Activated CD4-positive, alpha-beta T cell treated with anti-CD3 and anti-CD28 coated beads, Interleukin-2, amount 10 ng/mL, durations not matched to agents 24 days and 14 days (primary cell): ENCODE measurements at regions of chr19 and their contacts with region 1.

Region 1: GRCh38 chr19:6501740-6502648 is at the start of gene TUBB4A:
- DNase-seq: peak; percentile 85
- H3K4me3 Mint-ChIP-seq: peak within 1 kb of the TSS; percentile 83
- H3K27ac Mint-ChIP-seq: peak within 1 kb of the TSS; percentile 65
- H3K4me1 Mint-ChIP-seq: peaks cover 21% of the 10 kb centered on the region
- H3K27me3 Mint-ChIP-seq: peaks cover 22% of the 10 kb centered on the region
- total RNA-seq, gene TUBB4A: 2.8 and 3.3 TPM in 2 replicates

Region 2: DNA sequence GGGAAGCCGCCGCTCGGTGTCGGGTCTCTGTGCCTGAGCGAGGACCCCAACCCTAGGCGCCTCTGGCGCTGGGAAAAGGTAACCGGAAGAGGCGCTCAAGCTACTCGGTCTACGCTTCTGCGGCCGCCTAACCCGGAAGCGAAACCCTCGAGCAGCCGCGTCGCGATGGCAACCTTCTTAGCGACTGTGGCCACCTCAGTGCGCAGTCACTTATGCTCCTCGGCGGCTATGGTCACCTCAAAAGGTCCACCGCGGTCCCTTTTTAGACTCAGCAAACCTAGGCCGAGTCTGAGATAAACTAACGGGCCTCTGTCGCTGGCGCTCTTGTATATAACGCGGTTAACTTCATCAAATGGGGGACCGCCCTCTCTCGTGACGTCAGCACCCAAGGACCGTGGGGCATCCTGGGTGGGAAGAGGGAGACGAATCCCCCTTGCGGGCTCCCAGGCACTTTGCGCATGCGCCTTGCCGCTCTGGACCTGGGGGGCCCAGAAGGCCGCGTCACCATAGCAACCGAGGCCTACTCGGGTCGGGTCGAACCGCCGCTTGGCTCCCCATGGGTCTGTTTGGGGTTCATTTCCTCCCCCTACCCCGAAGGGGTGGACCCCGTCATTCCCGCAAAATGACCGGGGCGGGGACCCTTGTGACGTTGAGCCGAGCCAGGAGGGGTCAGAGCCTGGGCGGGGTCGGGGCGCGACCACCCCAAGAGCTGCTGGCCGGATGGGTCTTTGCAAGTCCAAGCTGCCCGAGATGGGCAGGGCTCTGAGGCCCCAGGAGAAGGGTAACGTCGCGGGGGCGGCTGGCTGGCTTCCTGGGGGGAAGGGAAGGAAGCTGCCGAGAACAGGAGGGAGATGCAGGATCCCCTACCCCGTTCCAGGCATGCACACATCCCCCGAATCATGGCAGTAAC is 108.7 kb before region 1 on chr19 and contains the start of gene GTF2F1:
- intact Hi-C with region 1: no loop called
- DNase-seq: peak; percentile 97
- H3K4me3 Mint-ChIP-seq: peak within 1 kb of the TSS; percentile 90
- H3K27ac Mint-ChIP-seq: peak within 1 kb of the TSS; percentile 95
- H3K4me1 Mint-ChIP-seq: peaks cover 18% of the 10 kb centered on the region
- H3K27me3 Mint-ChIP-seq: no peaks in the 10 kb centered on the region
- total RNA-seq, gene GTF2F1: 60.7 and 63.5 TPM in 2 replicates

Region 3: GRCh38 chr19:6481541-6482342 is 20.3 kb before region 1 on chr19 and contains the start of gene DENND1C:
- intact Hi-C with region 1: loop called (anchors 2 kb)
- DNase-seq: peak; percentile 91
- H3K4me3 Mint-ChIP-seq: peak within 1 kb of the TSS; percentile 99
- H3K27ac Mint-ChIP-seq: peak within 1 kb of the TSS; percentile 96
- H3K4me1 Mint-ChIP-seq: peaks cover 23% of the 10 kb centered on the region
- H3K27me3 Mint-ChIP-seq: no peaks in the 10 kb centered on the region
- total RNA-seq, gene DENND1C: 63.7 and 67.6 TPM in 2 replicates

Region 4: DNA sequence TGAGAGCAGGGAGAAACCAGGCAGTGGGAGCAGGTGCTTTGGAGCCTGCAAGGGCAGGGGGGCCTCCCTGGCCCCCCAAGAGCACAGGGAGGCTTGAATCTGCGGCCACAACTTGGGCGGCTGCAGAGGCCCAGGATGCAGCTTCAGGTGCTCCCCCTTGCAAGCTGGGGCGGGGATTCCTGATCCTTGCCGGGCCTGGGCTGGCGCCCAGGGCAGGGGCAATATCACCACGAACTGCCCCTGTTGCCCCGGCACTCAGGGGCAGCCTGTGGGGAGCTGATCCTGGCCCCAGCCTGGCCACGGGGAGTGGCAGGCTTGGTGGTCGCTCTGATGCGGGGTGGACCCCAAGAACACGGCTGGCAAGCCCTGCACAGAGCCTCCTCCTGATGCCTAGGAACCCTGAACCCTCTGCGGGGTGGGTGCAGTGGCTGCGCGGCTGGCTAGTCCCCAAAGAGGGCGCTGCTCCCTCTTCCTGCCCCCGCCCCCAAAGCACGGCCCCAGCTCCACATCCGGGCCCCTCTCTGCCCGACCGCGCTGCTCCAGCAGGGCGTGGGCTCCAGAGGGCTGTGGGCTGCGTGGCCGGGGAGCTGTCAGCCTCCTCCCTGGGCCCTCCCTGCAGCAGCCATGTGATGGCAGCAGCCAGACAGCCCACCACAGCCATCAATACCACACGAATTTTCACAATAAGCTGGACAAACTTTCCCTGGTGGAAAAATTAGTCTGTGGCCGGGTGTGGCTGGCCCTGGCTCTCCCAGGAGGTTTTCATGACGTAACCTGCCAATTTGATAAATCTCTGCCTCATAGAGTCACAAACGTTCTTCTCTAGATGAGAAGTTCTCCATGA is 49.8 kb after region 1 on chr19:
- intact Hi-C with region 1: no loop called
- DNase-seq: peak; percentile 86
- H3K4me3 Mint-ChIP-seq: no peak overlapping the region
- H3K27ac Mint-ChIP-seq: no peak overlapping the region
- H3K4me1 Mint-ChIP-seq: peaks cover 6% of the 10 kb centered on the region
- H3K27me3 Mint-ChIP-seq: peaks cover 3% of the 10 kb centered on the region